GM23248 (cell line): ENCODE measurements at regions of chr2 and their contacts with region 1.

Region 1: DNA sequence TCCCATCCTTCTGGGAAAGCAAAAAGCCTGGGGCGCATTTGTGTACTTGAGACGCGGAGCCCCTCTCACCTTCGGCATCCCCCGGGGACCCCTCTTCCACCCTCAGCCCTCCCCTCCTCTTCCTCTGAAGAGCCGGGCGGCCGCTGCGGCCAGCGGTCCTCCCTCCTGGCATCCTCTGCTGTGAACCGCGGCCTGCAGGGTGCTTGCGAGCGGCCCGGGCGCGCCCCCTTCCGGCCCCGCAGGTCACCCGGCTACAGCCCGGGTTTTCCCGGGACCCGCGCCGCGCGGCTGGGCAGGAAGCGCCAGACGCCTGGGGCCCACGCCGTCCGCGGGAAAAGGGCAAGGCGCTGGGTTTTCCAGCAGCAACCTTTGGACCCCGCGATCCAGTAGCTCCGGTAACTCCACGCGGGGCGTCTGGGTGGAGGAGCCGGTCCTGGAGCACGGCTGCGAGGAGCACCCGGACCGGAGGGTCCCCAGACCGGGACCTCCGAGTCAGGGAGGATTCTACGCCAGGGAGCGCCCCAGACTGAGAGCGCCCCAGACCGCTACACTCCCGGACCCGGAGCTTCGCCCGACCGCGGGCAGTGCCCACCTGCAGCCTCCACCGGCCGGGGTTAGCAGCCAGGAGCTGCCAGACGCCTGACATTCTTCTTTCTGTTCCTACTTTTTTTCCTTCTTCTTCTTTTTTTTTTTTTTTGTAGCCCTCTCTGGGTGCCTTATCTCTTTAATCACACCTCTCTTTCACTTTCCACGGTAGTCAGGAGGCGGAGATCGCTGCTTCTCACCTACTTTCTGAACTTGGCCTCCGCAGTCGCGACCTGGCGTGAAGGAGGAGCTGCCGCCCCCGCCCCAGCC is at the start of gene IL18R1:
- DNase-seq: peak; percentile 92
- H3K4me3 ChIP-seq: peak within 1 kb of the TSS; percentile 91
- H3K27ac ChIP-seq: no peak within 1 kb of the TSS
- H3K4me1 ChIP-seq: no peaks in the 10 kb centered on the region
- H3K27me3 ChIP-seq: 0 out of 2 replicates have a peak, but pooled peaks cover 4% of the 10 kb centered on the region
- total RNA-seq, gene IL18R1: 1.5 and 1.6 TPM in 2 replicates

Region 2: DNA sequence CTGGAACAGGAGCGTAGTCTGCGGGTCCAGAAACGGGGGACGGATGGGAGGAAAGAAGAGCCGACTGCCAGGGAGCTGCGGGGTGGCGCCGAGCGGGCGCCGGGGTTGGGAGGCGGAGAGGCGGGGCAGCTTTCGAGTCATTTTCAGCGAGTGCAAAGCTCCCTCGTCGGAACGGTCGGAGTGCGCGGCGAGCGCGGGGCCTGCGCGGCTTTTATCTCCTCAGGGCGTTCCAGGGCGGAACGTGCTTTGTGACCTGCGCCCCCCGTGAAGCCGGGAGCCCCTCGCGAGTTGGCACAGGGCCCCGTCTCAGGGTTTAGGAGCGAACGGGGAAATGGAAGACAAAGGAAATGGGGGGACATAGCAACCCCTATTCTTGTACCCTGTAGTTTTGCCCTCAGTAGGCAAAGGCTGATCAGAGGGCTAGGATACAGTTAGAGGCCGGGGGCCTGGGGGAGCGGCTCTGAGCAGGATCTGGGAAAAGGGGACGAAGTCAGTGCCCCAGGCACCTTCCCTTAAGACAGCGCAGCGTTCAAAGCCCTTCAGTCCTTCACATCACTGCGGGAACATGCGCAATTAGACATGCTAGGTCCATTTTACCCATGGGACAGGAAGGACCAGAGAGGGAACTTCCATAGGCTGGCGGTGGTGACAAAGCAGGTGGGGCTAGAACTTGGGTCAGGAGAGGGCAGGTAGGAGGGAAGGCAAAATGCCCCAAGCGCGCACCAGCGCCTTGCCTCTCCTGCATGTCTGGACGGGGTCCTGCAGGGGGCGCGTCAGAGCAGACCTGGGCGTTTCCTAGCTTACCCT is 104.5 kb before region 1 on chr2:
- in situ Hi-C with region 1: loop called (anchors 10 kb)
- DNase-seq: peak; percentile 84
- H3K4me3 ChIP-seq: peak overlapping the region; percentile 73
- H3K27ac ChIP-seq: no peak overlapping the region
- H3K4me1 ChIP-seq: peaks cover 1% of the 10 kb centered on the region
- H3K27me3 ChIP-seq: no peaks in the 10 kb centered on the region